Caco-2 (cell line): ENCODE measurements at regions of chr20 and their contacts with region 1.

Region 1: DNA sequence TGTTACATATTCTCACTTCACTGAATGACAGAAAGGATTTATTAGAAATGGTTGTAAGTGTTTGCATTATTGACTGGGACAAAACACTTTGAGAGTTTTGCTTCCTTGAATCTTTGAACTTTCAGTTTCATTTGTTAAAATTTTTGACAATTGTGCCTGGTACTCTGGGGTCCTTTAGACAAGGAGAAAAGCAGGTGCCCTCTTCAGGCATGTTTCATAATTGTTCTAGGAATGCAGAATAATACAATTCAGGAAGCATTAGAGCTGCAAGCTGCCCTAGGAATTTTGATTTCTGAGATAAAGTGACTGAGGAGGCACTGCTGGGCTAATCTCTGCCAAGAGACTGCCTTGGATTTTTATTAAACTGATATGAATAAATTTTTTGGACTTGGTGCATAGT is 49.7 kb downstream of the TOP1 start:
- DNase-seq: peak in 1 of 2 experiments; percentile 80
- H3K4me3 ChIP-seq: no peak overlapping the region
- H3K4me3 Mint-ChIP-seq: no peak overlapping the region
- H3K27ac Mint-ChIP-seq: peak overlapping the region; percentile 18
- H3K4me1 ChIP-seq: peaks cover 17% of the 10 kb centered on the region
- H3K4me1 Mint-ChIP-seq: peaks cover 29% of the 10 kb centered on the region
- H3K27me3 ChIP-seq: no peaks in the 10 kb centered on the region
- H3K27me3 Mint-ChIP-seq: no peaks in the 10 kb centered on the region
- CTCF ChIP-seq: peak; percentile 85 to 86

Region 2: GRCh38 chr20:41011551-41012067 is 66.7 kb before region 1 on chr20:
- CTCF ChIA-PET with region 1: interaction called, 13 read pairs
- POLR2A ChIA-PET with region 1: no interaction called
- intact Hi-C with region 1: no loop called
- DNase-seq: no peak
- H3K4me3 ChIP-seq: no peak overlapping the region
- H3K4me3 Mint-ChIP-seq: no peak overlapping the region
- H3K27ac Mint-ChIP-seq: peak overlapping the region; percentile 16
- H3K4me1 ChIP-seq: peaks cover 56% of the 10 kb centered on the region
- H3K4me1 Mint-ChIP-seq: peaks cover 57% of the 10 kb centered on the region
- H3K27me3 ChIP-seq: no peaks in the 10 kb centered on the region
- H3K27me3 Mint-ChIP-seq: no peaks in the 10 kb centered on the region
- CTCF ChIP-seq: no peak

Region 3: DNA sequence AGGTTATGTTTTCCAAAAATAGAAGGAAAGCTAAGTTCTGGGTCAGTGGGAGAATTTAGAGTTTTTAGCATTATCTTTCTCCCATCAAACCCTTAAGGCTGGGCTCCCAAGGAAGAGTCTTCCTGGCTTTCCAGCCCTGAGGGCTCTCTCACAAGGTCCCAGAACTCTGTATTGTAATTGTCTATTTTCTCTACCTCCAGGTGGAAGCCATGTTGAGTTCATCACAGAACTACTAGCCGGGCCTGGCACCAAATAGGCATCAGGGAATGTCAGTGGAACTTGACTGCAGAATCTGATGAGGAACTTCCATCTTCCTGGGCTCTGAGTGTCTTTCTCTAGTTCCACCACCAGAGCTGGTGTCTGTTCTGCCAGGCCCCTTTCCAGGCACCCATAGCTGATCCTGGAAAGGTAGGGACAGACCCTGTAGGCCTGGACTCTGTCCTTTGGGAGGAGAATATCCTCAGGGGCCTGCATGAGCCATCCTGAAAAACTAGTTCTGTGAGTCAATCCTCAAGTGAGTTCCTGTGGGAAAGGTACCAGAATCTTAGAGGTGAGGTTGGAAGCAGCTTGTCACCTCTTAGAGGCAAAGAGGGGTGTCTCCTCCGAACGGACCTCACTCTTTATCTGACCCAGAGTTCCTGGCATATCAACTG is 60.8 kb before region 1 on chr20:
- CTCF ChIA-PET with region 1: interaction called, 6 read pairs
- POLR2A ChIA-PET with region 1: no interaction called
- intact Hi-C with region 1: loop called (anchors 1 kb)
- DNase-seq: peak; percentile 91 to 93
- H3K4me3 ChIP-seq: no peak overlapping the region
- H3K4me3 Mint-ChIP-seq: peak overlapping the region; percentile 49
- H3K27ac Mint-ChIP-seq: peak overlapping the region; percentile 46
- H3K4me1 ChIP-seq: peaks cover 32% of the 10 kb centered on the region
- H3K4me1 Mint-ChIP-seq: peaks cover 54% of the 10 kb centered on the region
- H3K27me3 ChIP-seq: no peaks in the 10 kb centered on the region
- H3K27me3 Mint-ChIP-seq: no peaks in the 10 kb centered on the region
- CTCF ChIP-seq: peak; percentile 40 to 45

Region 4: GRCh38 chr20:41047975-41048305 is 30.4 kb before region 1 on chr20:
- CTCF ChIA-PET with region 1: interaction called, 4 read pairs
- POLR2A ChIA-PET with region 1: no interaction called
- intact Hi-C with region 1: loop called (anchors 1 kb)
- DNase-seq: no peak
- H3K4me3 ChIP-seq: no peak overlapping the region
- H3K4me3 Mint-ChIP-seq: no peak overlapping the region
- H3K27ac Mint-ChIP-seq: no peak overlapping the region
- H3K4me1 ChIP-seq: peaks cover 61% of the 10 kb centered on the region
- H3K4me1 Mint-ChIP-seq: peaks cover 66% of the 10 kb centered on the region
- H3K27me3 ChIP-seq: no peaks in the 10 kb centered on the region
- H3K27me3 Mint-ChIP-seq: no peaks in the 10 kb centered on the region
- CTCF ChIP-seq: no peak

Region 5: DNA sequence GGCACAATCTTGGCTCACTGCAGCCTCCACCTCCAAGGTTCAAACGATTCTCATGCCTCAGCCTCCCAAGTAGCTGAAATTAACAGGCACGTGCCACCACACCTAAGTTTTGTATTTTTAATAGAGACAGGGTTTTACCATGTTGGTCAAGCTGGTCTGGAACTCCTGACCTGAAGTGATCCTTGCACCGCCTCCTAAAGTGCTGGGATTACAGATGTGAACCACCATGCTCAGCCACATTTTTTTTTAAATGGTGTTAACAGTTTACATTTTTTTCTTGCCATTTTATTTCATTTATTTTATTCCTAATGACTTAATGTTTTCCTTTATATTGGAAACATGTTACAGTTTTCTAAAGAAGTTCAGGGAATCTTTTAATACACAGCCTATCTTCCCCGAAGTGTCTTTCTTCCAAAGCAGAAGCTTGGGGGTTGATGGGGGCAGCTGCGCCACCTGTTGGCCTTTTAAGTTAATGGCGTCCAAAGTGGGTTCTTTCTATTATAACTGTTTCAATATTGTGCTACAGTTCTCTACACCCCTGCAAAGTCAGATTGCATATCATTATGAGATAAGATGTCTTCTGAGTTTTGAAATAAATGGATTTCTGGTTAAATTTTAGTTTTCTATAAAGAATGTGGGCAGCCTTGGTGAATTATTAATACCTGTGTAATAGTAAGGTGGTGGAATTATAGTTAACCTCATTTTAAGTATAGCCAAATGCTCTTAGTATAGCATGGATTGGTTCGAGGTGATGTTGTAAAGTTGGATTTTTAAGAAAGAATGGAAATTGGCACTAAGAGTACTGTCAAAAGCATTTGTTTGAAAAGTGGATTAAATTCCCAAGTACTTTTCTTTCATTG is 17.0 kb after region 1 on chr20:
- CTCF ChIA-PET with region 1: interaction called, 14 read pairs
- POLR2A ChIA-PET with region 1: no interaction called
- intact Hi-C with region 1: no loop called
- DNase-seq: peak; percentile 66 to 75
- H3K4me3 ChIP-seq: no peak overlapping the region
- H3K4me3 Mint-ChIP-seq: no peak overlapping the region
- H3K27ac Mint-ChIP-seq: no peak overlapping the region
- H3K4me1 ChIP-seq: no peaks in the 10 kb centered on the region
- H3K4me1 Mint-ChIP-seq: no peaks in the 10 kb centered on the region
- H3K27me3 ChIP-seq: no peaks in the 10 kb centered on the region
- H3K27me3 Mint-ChIP-seq: no peaks in the 10 kb centered on the region
- CTCF ChIP-seq: peak; percentile 98 to 99

Region 6: GRCh38 chr20:41177636-41178035 is 99.3 kb after region 1 on chr20:
- CTCF ChIA-PET with region 1: no interaction called
- POLR2A ChIA-PET with region 1: no interaction called
- intact Hi-C with region 1: no loop called
- DNase-seq: peak in 1 of 2 experiments; percentile 36
- H3K4me3 ChIP-seq: no peak overlapping the region
- H3K4me3 Mint-ChIP-seq: no peak overlapping the region
- H3K27ac Mint-ChIP-seq: no peak overlapping the region
- H3K4me1 ChIP-seq: no peaks in the 10 kb centered on the region
- H3K4me1 Mint-ChIP-seq: no peaks in the 10 kb centered on the region
- H3K27me3 ChIP-seq: no peaks in the 10 kb centered on the region
- H3K27me3 Mint-ChIP-seq: no peaks in the 10 kb centered on the region
- CTCF ChIP-seq: no peak

Region 7: DNA sequence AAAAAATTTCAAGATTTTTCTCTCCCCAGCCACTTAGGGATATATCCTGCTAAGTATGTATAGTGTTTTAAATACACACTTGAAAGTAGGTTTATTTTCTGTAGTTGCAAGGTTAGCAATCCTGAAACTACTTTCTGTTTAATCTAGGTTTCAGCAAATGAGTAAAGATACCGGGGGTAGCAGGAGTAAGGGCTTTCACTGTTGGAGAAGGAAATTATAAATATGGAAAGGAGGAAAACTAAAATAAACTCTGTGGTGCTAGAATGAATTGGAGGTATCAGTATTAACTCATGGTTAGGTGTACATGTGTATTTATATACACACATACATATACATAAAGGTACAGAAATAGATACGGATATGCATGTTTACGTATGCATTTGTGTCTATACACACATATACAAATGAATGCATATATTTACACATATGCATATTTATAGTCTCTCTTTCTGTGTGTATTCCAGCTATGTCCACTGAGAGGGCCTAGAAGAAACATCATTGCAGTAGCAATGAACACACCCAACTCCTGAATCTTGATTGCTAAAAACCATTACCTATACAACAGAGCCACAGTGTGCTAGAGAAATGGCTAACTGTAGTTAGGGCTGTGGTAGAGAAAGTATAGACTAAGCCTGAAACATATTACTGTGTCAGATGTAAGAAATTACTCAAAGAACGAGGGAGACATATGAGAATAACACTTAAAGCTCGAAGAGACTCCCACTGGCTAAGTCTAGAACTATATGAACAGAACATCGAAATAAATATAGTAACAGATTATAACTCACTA is 384.2 kb after region 1 on chr20:
- CTCF ChIA-PET with region 1: no interaction called
- POLR2A ChIA-PET with region 1: no interaction called
- intact Hi-C with region 1: no loop called
- DNase-seq: no peak
- H3K4me3 ChIP-seq: no peak overlapping the region
- H3K4me3 Mint-ChIP-seq: no peak overlapping the region
- H3K27ac Mint-ChIP-seq: no peak overlapping the region
- H3K4me1 ChIP-seq: no peaks in the 10 kb centered on the region
- H3K4me1 Mint-ChIP-seq: no peaks in the 10 kb centered on the region
- H3K27me3 ChIP-seq: no peaks in the 10 kb centered on the region
- H3K27me3 Mint-ChIP-seq: no peaks in the 10 kb centered on the region
- CTCF ChIP-seq: no peak